Heart right ventricle (tissue), 16 donors: ENCODE measurements at regions of chr11 and their contacts with region 1.

Region 1: GRCh38 chr11:64723117-64723906 is at the start of gene NRXN2:
- DNase-seq: peak; percentile 82 to 88
- ATAC-seq: peak; percentile 95 to 98 (median 97)
- H3K4me3 ChIP-seq: peak within 1 kb of the TSS; percentile 67 to 100 (median 89)
- H3K27ac ChIP-seq: peak within 1 kb of the TSS in 6 of 10 donors; percentile 34 to 87 (median 66)
- H3K4me1 ChIP-seq: peaks cover 0 to 8% (median 5%) of the 10 kb centered on the region in 9 donors
- H3K27me3 ChIP-seq: peaks cover 0 to 46% (median 40%) of the 10 kb centered on the region in 7 donors
- CTCF ChIP-seq: peak; percentile 95 to 99 (median 98)
- total RNA-seq, gene NRXN2: 0.81 to 5.5 (median 1.4) TPM

Region 2: DNA sequence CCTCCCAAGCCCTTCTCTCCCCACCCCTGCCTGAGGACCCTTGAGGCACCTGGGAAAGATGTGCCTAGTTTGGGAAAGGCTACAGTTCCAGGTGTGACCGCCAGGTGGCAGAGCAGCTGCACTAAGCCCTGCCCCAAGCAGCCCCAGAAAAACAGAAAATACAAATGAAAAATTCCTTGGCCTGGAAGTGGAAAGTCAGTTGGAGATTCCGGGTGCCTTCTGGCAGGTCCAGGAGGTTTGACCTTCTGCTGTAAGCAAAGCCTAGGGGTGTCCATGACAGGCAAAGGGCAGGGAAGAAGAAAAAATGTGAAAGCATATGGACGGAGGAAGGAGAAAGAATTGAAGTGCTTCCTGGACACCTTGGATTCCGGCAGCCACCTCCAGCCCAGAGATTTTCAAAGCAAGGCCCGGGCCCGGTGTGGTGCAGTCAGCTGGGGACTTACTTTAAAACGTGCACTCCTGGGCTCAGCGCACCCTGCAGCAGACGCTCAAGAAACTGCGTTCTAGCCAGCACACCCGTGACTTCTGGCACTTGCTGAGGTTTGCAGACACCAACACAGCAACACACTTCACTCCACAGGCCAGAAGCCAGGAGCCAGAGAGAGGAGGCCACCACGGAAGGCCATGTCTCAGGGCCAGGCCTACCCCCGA is 169.6 kb before region 1 on chr11:
- intact Hi-C with region 1: loop called in 3 of 10 experiments (anchors 5 kb)
- DNase-seq: peak; percentile 49 to 70
- ATAC-seq: peak; percentile 57 to 75 (median 68)
- H3K4me3 ChIP-seq: peak overlapping the region in 1 of 10 donors; percentile 3
- H3K27ac ChIP-seq: peak overlapping the region in 9 of 10 donors; percentile 52 to 83 (median 74)
- H3K4me1 ChIP-seq: peaks cover 6 to 26% (median 21%) of the 10 kb centered on the region in 9 donors
- H3K27me3 ChIP-seq: peaks cover 0 to under 1% (median 0%) of the 10 kb centered on the region in 7 donors
- CTCF ChIP-seq: peak in 8 of 9 donors; percentile 91 to 99 (median 98)

Region 3: GRCh38 chr11:64675450-64676260 is 47.7 kb before region 1 on chr11:
- intact Hi-C with region 1: no loop called
- DNase-seq: peak; percentile 80 to 87
- ATAC-seq: peak; percentile 95 to 99 (median 98)
- H3K4me3 ChIP-seq: no peak overlapping the region
- H3K27ac ChIP-seq: peak overlapping the region in 2 of 10 donors; percentile 12 to 25
- H3K4me1 ChIP-seq: peaks cover 7 to 26% (median 16%) of the 10 kb centered on the region in 9 donors
- H3K27me3 ChIP-seq: peaks cover 0 to 34% (median 6%) of the 10 kb centered on the region in 7 donors
- CTCF ChIP-seq: no peak

Region 4: GRCh38 chr11:64688534-64688982 is 34.8 kb before region 1 on chr11:
- intact Hi-C with region 1: loop called in 7 of 10 experiments (anchors 1 to 5 kb)
- DNase-seq: peak; percentile 90 to 92
- ATAC-seq: peak; percentile 88 to 97 (median 94)
- H3K4me3 ChIP-seq: peak overlapping the region in 8 of 10 donors; percentile 24 to 60 (median 50)
- H3K27ac ChIP-seq: peak overlapping the region; percentile 8 to 83 (median 66)
- H3K4me1 ChIP-seq: peaks cover 5 to 28% (median 18%) of the 10 kb centered on the region in 9 donors
- H3K27me3 ChIP-seq: peaks cover 0 to 16% (median 10%) of the 10 kb centered on the region in 7 donors
- CTCF ChIP-seq: peak; percentile 89 to 98 (median 94)

Region 5: DNA sequence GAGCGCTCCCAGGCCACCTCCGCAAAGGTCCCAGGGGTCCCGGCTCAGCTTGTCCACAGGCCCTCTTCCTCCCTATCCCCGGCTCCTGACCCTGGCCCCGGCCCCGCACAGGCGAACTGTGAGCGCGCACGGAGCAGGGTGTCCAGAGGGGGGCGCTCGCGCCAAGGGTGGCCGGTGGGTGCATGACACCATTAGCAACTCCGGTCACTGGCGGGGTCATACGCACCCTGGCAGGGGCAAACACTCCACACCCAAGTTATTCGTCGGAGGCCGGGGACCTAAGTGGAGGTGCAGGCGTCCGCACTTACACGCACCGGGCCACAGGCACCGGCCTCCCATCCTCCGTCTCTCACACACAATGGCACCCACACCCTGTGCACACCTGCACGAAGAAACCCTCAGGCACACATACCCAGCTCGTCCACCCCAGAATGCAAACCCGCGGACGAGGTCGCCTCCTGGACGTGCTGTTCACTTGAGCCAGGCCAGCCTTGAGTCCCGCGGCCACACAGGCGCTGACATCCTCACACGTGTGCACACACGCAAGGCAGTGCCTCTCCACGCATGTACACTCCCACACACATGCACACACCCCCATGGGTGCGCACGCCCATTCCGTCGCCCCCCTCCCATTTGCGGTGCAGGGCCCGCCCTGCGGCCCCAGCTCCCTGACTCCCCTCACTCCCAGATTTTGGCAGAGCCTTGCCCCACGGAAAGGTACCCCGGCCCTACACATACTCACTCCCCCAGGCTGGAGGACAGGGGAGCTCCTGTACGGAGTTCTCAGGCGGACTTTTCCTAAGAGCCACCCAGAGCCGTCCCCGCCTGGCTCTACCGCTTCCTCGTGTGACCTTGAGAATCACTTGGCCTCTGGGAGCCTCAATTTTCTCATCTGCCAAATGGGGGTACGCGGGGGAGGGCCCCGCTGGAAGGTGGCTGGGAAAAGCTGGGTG is 20.6 kb after region 1 on chr11 and contains the start of gene RASGRP2:
- intact Hi-C with region 1: no loop called
- DNase-seq: peak; percentile 90 to 92
- ATAC-seq: peak; percentile 40 to 64 (median 55)
- H3K4me3 ChIP-seq: peak within 1 kb of the TSS; percentile 44 to 80 (median 68)
- H3K27ac ChIP-seq: peak within 1 kb of the TSS; percentile 91 to 99 (median 96)
- H3K4me1 ChIP-seq: peaks cover 16 to 44% (median 41%) of the 10 kb centered on the region in 9 donors
- H3K27me3 ChIP-seq: no peaks in the 10 kb centered on the region
- CTCF ChIP-seq: peak; percentile 68 to 85 (median 79)
- total RNA-seq, gene RASGRP2: 18.9 to 49.8 (median 25.4) TPM